SK-N-SH (cell line): ENCODE measurements at regions of chr14 and their contacts with region 1.

Region 1: DNA sequence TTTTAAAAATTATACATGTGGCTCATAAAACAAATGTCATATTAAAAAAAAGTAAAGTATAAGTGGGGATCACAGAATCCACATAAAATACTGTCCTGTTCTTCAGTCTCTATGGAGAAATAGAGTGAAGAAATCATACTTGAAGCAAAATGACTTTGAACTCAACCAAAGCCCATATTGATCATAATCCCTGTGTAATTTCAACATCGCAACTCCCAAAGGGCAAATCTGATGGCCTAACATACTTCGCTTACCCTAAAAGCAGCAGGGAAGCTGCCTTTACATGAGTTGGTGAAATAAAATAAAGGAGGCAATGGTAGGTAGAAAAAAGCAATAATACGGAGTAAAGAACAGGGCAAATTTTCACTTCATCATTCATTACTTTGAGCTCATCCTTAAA is 101.8 kb downstream of the CEP128 start:
- DNase-seq: no peak
- H3K4me3 ChIP-seq: no peak overlapping the region
- H3K27ac ChIP-seq: no peak overlapping the region
- H3K4me1 ChIP-seq: 0 out of 4 replicates have a peak, but pooled peaks cover 0 to 1% of the 10 kb centered on the region in 2 experiments
- H3K27me3 ChIP-seq: no peaks in the 10 kb centered on the region
- CTCF ChIP-seq: no peak
- EP300 ChIP-seq: no peak
- RAD21 ChIP-seq: no peak

Region 2: DNA sequence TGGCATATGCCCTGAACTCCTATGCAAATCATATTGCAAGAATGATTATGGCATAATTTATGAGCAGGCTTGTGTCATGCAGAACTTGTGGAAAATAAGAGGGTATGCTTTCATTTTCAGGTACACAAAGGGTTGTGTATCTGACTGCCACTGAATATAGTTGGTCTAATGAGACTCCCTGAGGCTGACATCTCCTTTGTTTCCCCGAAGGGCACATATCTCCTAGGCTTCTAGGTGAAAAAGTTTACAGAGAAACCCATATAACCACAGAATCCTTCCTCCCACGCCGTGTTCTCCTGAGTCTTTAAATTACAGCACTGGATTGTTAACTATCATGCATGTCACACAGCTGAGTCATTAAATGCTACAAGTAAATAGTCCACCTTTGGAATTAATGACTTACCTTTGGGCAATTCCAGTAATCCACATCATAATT is 271.7 kb before region 1 on chr14:
- CTCF ChIA-PET with region 1: no interaction called
- POLR2A ChIA-PET with region 1: no interaction called
- DNase-seq: no peak
- H3K4me3 ChIP-seq: no peak overlapping the region
- H3K27ac ChIP-seq: no peak overlapping the region
- H3K4me1 ChIP-seq: peaks cover 0 to 2% of the 10 kb centered on the region in 2 experiments; a peak in 1 of 4 replicates
- H3K27me3 ChIP-seq: no peaks in the 10 kb centered on the region
- CTCF ChIP-seq: no peak
- EP300 ChIP-seq: no peak
- RAD21 ChIP-seq: no peak

Region 3: GRCh38 chr14:80850197-80850814 is 10.6 kb after region 1 on chr14:
- CTCF ChIA-PET with region 1: interaction called, 14 read pairs
- POLR2A ChIA-PET with region 1: no interaction called
- DNase-seq: peak; percentile 5
- H3K4me3 ChIP-seq: no peak overlapping the region
- H3K27ac ChIP-seq: no peak overlapping the region
- H3K4me1 ChIP-seq: no peaks in the 10 kb centered on the region
- H3K27me3 ChIP-seq: no peaks in the 10 kb centered on the region
- CTCF ChIP-seq: peak; percentile 77
- EP300 ChIP-seq: no peak
- RAD21 ChIP-seq: peak; percentile 77